ENCODE measurements at regions of chr11 and their contacts with region 1.

Region 1: DNA sequence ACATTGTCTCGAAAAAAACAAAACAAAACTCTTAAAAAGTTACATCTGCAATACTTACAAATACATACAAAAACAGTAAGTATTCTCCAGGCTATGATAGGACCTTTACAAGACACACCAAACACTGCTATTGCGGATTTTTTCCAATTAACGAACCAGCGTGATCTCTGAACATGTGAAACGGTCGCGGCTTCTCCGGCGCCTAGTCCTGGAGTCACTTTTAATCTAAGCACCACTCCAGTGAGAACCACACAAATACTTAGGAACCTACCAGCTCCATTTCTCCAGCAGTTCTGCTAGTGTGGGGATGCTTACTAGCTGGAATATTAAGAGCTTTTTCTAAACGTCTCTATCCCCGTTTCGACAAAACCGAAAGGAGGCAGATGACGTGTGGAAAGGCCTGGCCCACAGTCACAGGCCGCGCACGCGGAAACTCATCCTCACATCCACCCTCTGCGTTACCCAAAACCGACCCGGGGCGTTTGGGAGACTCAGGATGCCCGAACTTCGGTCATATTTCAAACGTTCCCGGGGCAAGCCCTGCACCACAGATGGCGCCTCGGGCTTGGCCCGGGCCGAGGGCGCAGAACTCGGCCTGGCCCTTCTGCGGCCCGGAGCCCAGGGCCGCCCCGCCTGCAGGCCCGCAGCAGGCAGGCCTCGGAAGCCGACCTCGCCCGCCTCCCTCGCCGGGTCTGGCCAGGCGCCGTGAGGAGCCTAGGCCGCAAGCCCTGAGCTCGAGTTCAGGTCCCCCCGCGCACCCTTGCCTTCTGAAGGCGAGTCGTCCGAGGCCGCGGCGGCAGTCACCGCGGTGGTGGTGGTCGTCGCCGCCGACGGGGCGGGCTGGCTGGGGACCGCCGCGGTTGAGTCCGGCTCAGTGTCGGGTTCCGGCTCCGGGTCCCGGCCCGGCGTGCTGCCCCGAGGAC is 575 bp downstream of the FNBP4 start:
- DNase-seq: peak; percentile 60 to 84 (median 79)
- ATAC-seq: peak; percentile 52
- H3K4me3 ChIP-seq: peak overlapping the region; percentile 94
- H3K4me3 Mint-ChIP-seq: peak overlapping the region; percentile 88 to 100 (median 96)
- H3K27ac ChIP-seq: peak overlapping the region; percentile 97
- H3K27ac Mint-ChIP-seq: peak overlapping the region; percentile 96 to 100 (median 99)
- H3K4me1 ChIP-seq: peaks cover 20 to 22% of the 10 kb centered on the region in 2 donors
- H3K4me1 Mint-ChIP-seq: peaks cover 16 to 39% (median 23%) of the 10 kb centered on the region in 7 donors
- H3K27me3 ChIP-seq: no peaks in the 10 kb centered on the region
- H3K27me3 Mint-ChIP-seq: no peaks in the 10 kb centered on the region

Region 2: DNA sequence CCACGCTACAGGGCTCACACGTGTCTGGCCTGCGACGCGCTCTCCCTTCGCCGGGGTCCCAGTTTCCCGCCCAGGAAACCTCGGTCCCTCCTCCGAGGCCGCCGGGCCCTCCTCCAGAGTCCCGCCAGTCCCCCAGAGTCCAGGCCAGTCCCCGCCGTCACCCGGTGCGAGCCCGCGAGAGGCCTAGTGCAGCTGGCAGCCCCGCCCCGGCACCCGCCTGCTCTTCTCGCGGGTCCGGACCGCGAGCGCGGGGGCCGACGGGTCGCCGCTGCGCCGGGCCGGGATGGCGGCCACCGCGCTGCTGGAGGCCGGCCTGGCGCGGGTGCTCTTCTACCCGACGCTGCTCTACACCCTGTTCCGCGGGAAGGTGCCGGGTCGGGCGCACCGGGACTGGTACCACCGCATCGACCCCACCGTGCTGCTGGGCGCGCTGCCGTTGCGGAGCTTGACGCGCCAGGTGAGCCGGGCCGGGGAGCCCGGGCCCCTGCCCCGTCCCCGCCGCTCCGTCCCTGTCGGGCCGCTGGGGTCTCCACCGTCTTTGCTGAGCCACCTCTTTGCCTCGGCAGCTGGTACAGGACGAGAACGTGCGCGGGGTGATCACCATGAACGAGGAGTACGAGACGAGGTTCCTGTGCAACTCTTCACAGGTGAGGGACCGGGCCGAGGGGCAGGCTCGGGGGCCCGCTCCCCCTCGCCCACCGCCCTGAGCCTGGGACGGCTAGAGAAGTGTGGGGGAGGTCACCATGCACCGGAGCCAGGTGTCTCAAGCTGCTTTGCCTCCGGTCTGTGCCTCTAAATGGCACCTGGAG is 201.0 kb before region 1 on chr11 and contains the start of gene PTPMT1:
- CTCF ChIA-PET with region 1: no interaction called
- POLR2A ChIA-PET with region 1: interaction called, 3 read pairs
- intact Hi-C with region 1: loop called in 1 of 2 experiments (anchors 1 kb)
- DNase-seq: peak; percentile 42 to 75 (median 57)
- ATAC-seq: peak; percentile 92
- H3K4me3 ChIP-seq: peak within 1 kb of the TSS; percentile 88
- H3K4me3 Mint-ChIP-seq: peak within 1 kb of the TSS; percentile 81 to 89 (median 86)
- H3K27ac ChIP-seq: peak within 1 kb of the TSS; percentile 89
- H3K27ac Mint-ChIP-seq: peak within 1 kb of the TSS; percentile 78 to 95 (median 84)
- H3K4me1 ChIP-seq: peaks cover 3 to 8% of the 10 kb centered on the region in 2 donors
- H3K4me1 Mint-ChIP-seq: peaks cover 0 to 32% (median 24%) of the 10 kb centered on the region in 7 donors
- H3K27me3 ChIP-seq: no peaks in the 10 kb centered on the region
- H3K27me3 Mint-ChIP-seq: no peaks in the 10 kb centered on the region
- total RNA-seq, gene PTPMT1: 20.5 to 32.9 (median 22.7) TPM

Region 3: DNA sequence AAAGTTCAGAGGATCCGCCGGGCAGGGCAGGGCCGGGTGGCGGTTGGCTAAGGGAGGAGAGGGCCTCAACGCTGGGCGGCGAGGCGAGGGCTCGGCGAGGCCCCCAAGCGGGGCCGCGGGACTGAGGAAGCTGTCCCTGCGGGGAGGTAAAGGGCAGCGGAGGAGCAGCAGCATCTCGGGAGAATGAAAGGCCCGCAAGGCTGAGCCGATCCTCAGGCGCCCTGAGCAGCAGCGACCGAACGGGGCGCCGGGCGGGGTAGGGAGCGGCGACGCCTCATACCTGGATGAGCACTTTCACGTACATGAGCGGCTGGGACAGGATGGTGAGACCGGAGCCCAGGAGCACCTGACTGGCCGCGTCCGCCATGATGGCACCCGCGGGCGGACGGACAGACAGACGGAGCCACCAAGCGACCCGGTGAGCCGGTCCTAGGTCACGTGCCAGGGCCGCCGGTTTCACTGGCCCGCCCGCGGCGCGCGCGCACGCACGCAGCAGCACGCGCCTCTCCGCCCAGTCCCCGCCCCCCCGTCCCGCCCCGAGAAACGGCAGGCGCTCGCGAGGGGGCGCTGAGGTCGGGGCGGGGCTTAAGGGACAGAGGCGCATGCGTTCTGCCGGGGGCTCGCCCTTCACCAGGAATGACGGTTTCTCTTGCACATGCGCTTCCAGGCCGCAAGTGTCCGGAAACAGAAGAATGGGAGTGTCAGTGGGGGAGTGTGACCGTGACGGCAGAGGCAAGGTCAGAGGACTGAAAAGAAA is 124.3 kb before region 1 on chr11 and contains the start of gene MTCH2:
- CTCF ChIA-PET with region 1: no interaction called
- POLR2A ChIA-PET with region 1: interaction called, 3 read pairs
- intact Hi-C with region 1: loop called (anchors 1 kb)
- DNase-seq: peak; percentile 92 to 97 (median 95)
- ATAC-seq: peak; percentile 97
- H3K4me3 ChIP-seq: peak within 1 kb of the TSS; percentile 85
- H3K4me3 Mint-ChIP-seq: peak within 1 kb of the TSS; percentile 92 to 99 (median 96)
- H3K27ac ChIP-seq: peak within 1 kb of the TSS; percentile 83
- H3K27ac Mint-ChIP-seq: peak within 1 kb of the TSS; percentile 94 to 99 (median 97)
- H3K4me1 ChIP-seq: peaks cover 8 to 11% of the 10 kb centered on the region in 2 donors
- H3K4me1 Mint-ChIP-seq: peaks cover 17 to 32% (median 25%) of the 10 kb centered on the region in 7 donors
- H3K27me3 ChIP-seq: no peaks in the 10 kb centered on the region
- H3K27me3 Mint-ChIP-seq: no peaks in the 10 kb centered on the region
- total RNA-seq, gene MTCH2: 19.8 to 88.6 (median 21.1) TPM

Region 4: GRCh38 chr11:47715082-47715669 is 51.4 kb before region 1 on chr11 and contains the start of gene AGBL2:
- CTCF ChIA-PET with region 1: interaction called, 4 read pairs
- POLR2A ChIA-PET with region 1: interaction called, 27 read pairs
- intact Hi-C with region 1: loop called (anchors 1 kb)
- DNase-seq: peak; percentile 61 to 85 (median 82)
- ATAC-seq: peak; percentile 99
- H3K4me3 ChIP-seq: peak within 1 kb of the TSS; percentile 94
- H3K4me3 Mint-ChIP-seq: peak within 1 kb of the TSS; percentile 95 to 99 (median 97)
- H3K27ac ChIP-seq: peak within 1 kb of the TSS; percentile 84
- H3K27ac Mint-ChIP-seq: peak within 1 kb of the TSS; percentile 96 to 99 (median 98)
- H3K4me1 ChIP-seq: peaks cover 7 to 15% of the 10 kb centered on the region in 2 donors
- H3K4me1 Mint-ChIP-seq: peaks cover 0 to 22% (median 15%) of the 10 kb centered on the region in 7 donors
- H3K27me3 ChIP-seq: no peaks in the 10 kb centered on the region
- H3K27me3 Mint-ChIP-seq: no peaks in the 10 kb centered on the region
- total RNA-seq, gene AGBL2: 4.7 to 11.3 (median 8.1) TPM

Region 5: GRCh38 chr11:47750725-47751124 is 15.8 kb before region 1 on chr11:
- CTCF ChIA-PET with region 1: no interaction called
- POLR2A ChIA-PET with region 1: interaction called, 7 read pairs
- intact Hi-C with region 1: loop called in 1 of 2 experiments (anchors 2 kb)
- DNase-seq: no peak
- ATAC-seq: no peak
- H3K4me3 ChIP-seq: no peak overlapping the region
- H3K4me3 Mint-ChIP-seq: no peak overlapping the region
- H3K27ac ChIP-seq: no peak overlapping the region
- H3K27ac Mint-ChIP-seq: peak overlapping the region in 5 of 9 donors; percentile 36 to 68 (median 51)
- H3K4me1 ChIP-seq: no peaks in the 10 kb centered on the region
- H3K4me1 Mint-ChIP-seq: peaks cover 2 to 31% (median 23%) of the 10 kb centered on the region in 7 donors
- H3K27me3 ChIP-seq: no peaks in the 10 kb centered on the region
- H3K27me3 Mint-ChIP-seq: no peaks in the 10 kb centered on the region

Region 6: GRCh38 chr11:47917643-47918369 is 151.2 kb after region 1 on chr11:
- CTCF ChIA-PET with region 1: no interaction called
- POLR2A ChIA-PET with region 1: no interaction called
- intact Hi-C with region 1: no loop called
- DNase-seq: no peak
- ATAC-seq: peak; percentile 71
- H3K4me3 ChIP-seq: no peak overlapping the region
- H3K4me3 Mint-ChIP-seq: peak overlapping the region in 1 of 10 donors; percentile 24
- H3K27ac ChIP-seq: no peak overlapping the region
- H3K27ac Mint-ChIP-seq: peak overlapping the region; percentile 4 to 86 (median 60)
- H3K4me1 ChIP-seq: peaks cover 39 to 42% of the 10 kb centered on the region in 2 donors
- H3K4me1 Mint-ChIP-seq: peaks cover 27 to 77% (median 65%) of the 10 kb centered on the region in 7 donors
- H3K27me3 ChIP-seq: no peaks in the 10 kb centered on the region
- H3K27me3 Mint-ChIP-seq: no peaks in the 10 kb centered on the region

Region 7: GRCh38 chr11:48109046-48109666 is 342.6 kb after region 1 on chr11:
- CTCF ChIA-PET with region 1: no interaction called
- POLR2A ChIA-PET with region 1: interaction called, 3 read pairs
- intact Hi-C with region 1: loop called in 1 of 2 experiments (anchors 2 kb)
- DNase-seq: peak in 6 of 9 donors; percentile 20 to 50 (median 32)
- ATAC-seq: peak; percentile 57
- H3K4me3 ChIP-seq: peak overlapping the region; percentile 26
- H3K4me3 Mint-ChIP-seq: peak overlapping the region; percentile 38 to 86 (median 76)
- H3K27ac ChIP-seq: peak overlapping the region; percentile 30
- H3K27ac Mint-ChIP-seq: peak overlapping the region in 8 of 9 donors; percentile 14 to 90 (median 80)
- H3K4me1 ChIP-seq: peaks cover 18 to 27% of the 10 kb centered on the region in 2 donors
- H3K4me1 Mint-ChIP-seq: peaks cover 32 to 59% (median 49%) of the 10 kb centered on the region in 7 donors
- H3K27me3 ChIP-seq: no peaks in the 10 kb centered on the region
- H3K27me3 Mint-ChIP-seq: no peaks in the 10 kb centered on the region